CD4-positive, alpha-beta T cell (primary cell): ENCODE measurements at regions of chr10 and their contacts with region 1.

Region 1: GRCh38 chr10:28334296-28334695 is 31.4 kb upstream of the MPP7 start:
- DNase-seq: peak in 8 of 14 experiments; percentile 17 to 97 (median 52)
- ATAC-seq: peak; percentile 68
- H3K4me3 ChIP-seq: peak overlapping the region; percentile 76
- H3K4me3 Mint-ChIP-seq: peak overlapping the region; percentile 90
- H3K27ac ChIP-seq: peak overlapping the region; percentile 97 to 99
- H3K27ac Mint-ChIP-seq: peak overlapping the region; percentile 98
- H3K4me1 ChIP-seq: peaks cover 64% of the 10 kb centered on the region
- H3K4me1 Mint-ChIP-seq: peaks cover 85% of the 10 kb centered on the region
- H3K27me3 ChIP-seq: no peaks in the 10 kb centered on the region
- H3K27me3 Mint-ChIP-seq: no peaks in the 10 kb centered on the region
- CTCF ChIP-seq: no peak

Region 2: DNA sequence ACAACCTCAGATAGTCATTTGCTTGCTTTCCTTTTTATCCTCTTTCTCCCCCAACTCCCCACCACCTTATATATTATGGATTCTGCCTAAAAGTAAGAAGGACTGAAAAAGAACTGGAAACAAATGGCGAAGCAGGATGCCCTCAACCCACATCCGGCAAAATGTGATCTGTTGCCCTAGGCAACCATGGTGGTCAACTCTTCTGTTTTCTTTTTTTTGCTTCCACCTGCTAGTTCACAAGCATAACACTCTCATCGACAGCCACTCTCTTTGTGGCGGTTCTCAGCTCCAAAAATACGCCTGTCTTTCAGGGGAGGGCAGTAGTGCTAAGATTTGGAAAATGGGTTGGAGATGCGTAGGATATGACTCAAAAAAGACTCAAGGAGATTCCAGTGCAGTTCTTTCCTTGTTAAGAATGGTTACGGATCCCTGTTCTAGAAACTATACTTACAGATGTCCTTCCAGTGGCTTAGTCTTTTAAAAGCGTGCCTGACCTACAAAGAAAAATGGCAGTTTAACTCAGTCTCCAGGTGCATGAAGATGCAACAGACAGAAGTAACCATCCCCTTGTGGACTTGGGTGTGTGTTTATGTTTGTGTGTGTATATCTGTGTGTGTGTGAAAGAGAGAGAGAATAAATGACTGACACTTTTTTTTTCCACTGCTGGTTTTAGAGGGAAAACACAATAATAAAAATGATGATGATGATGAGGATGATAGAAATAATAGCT is 1885.4 kb before region 1 on chr10:
- CTCF ChIA-PET with region 1: no interaction called
- POLR2A ChIA-PET with region 1: no interaction called
- intact Hi-C with region 1: loop called in 1 of 2 experiments (anchors 5 kb)
- DNase-seq: peak; percentile 42 to 94 (median 62)
- ATAC-seq: peak; percentile 82
- H3K4me3 ChIP-seq: peak overlapping the region; percentile 20
- H3K4me3 Mint-ChIP-seq: peak overlapping the region; percentile 84
- H3K27ac ChIP-seq: peak overlapping the region; percentile 70 to 79
- H3K27ac Mint-ChIP-seq: peak overlapping the region; percentile 94
- H3K4me1 ChIP-seq: peaks cover 66% of the 10 kb centered on the region
- H3K4me1 Mint-ChIP-seq: peaks cover 92% of the 10 kb centered on the region
- H3K27me3 ChIP-seq: no peaks in the 10 kb centered on the region
- H3K27me3 Mint-ChIP-seq: no peaks in the 10 kb centered on the region
- CTCF ChIP-seq: no peak

Region 3: DNA sequence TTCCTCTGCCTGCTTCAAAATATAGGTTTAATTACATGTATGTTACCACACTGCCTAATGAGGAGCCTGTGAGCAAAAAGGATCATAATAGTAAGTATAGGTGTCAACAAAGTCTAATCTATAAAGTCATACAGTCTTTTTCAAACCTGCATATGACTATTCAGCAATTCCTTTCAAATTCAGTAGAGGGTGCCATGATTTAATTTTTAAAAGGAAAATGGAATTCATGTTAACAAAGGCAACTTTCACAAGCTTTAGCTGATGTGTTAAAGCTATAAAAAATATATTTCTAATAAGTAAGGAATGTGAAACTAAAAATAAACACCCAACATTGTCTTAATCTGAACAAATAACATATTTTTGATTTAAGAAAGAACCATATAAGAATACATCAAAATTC is 83.5 kb before region 1 on chr10:
- CTCF ChIA-PET with region 1: interaction called, 3 read pairs
- POLR2A ChIA-PET with region 1: interaction called, 6 read pairs
- intact Hi-C with region 1: loop called in 1 of 2 experiments (anchors 5 kb)
- DNase-seq: peak in 3 of 14 experiments; percentile 44 to 50 (median 48)
- ATAC-seq: peak; percentile 56
- H3K4me3 ChIP-seq: no peak overlapping the region
- H3K4me3 Mint-ChIP-seq: no peak overlapping the region
- H3K27ac ChIP-seq: no peak overlapping the region
- H3K27ac Mint-ChIP-seq: no peak overlapping the region
- H3K4me1 ChIP-seq: no peaks in the 10 kb centered on the region
- H3K4me1 Mint-ChIP-seq: peaks cover 67% of the 10 kb centered on the region
- H3K27me3 ChIP-seq: no peaks in the 10 kb centered on the region
- H3K27me3 Mint-ChIP-seq: no peaks in the 10 kb centered on the region
- CTCF ChIP-seq: peak; percentile 52

Region 4: DNA sequence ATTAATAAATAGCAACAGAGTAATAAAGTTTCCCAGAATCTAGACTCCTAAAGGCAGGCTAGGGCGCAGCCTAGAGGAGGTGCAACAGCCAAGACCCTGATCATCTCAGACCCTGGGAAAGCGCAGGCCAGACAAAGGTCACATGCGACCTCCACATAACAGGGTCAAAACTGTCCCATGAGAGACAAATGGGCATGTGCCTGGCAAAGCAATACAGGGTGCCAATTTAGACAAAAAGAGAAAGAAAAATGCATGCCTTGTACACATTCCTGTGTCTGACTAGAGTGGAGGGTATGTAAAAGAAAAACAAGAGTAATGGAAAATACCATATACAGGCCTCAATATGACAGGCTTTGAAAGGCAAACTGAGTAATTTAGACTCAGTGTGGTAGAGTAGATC is 53.6 kb before region 1 on chr10:
- CTCF ChIA-PET with region 1: no interaction called
- POLR2A ChIA-PET with region 1: no interaction called
- intact Hi-C with region 1: no loop called
- DNase-seq: no peak
- ATAC-seq: no peak
- H3K4me3 ChIP-seq: no peak overlapping the region
- H3K4me3 Mint-ChIP-seq: no peak overlapping the region
- H3K27ac ChIP-seq: no peak overlapping the region
- H3K27ac Mint-ChIP-seq: no peak overlapping the region
- H3K4me1 ChIP-seq: no peaks in the 10 kb centered on the region
- H3K4me1 Mint-ChIP-seq: peaks cover 83% of the 10 kb centered on the region
- H3K27me3 ChIP-seq: no peaks in the 10 kb centered on the region
- H3K27me3 Mint-ChIP-seq: no peaks in the 10 kb centered on the region
- CTCF ChIP-seq: no peak

Region 5: DNA sequence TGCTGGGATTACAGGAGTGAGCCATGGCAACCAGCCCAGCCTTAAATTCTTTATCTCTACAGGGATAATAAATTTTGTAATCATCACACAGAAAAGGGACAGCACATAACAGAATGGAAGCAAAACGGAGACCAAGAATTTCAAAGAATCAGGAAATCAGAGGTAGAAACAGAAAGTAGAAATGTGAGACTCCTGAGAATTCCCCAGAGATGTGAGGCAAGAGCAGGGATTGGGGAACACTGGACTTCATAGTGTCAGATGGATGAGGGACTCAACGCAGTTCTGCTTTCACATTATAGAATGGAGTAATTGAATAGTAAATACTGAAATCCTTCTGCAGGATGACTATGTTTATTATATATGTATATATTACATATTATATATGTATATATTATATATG is 21.1 kb after region 1 on chr10:
- CTCF ChIA-PET with region 1: interaction called, 5 read pairs
- POLR2A ChIA-PET with region 1: interaction called, 4 read pairs
- intact Hi-C with region 1: loop called in 1 of 2 experiments (anchors 2 kb)
- DNase-seq: no peak
- ATAC-seq: no peak
- H3K4me3 ChIP-seq: no peak overlapping the region
- H3K4me3 Mint-ChIP-seq: no peak overlapping the region
- H3K27ac ChIP-seq: no peak overlapping the region
- H3K27ac Mint-ChIP-seq: no peak overlapping the region
- H3K4me1 ChIP-seq: no peaks in the 10 kb centered on the region
- H3K4me1 Mint-ChIP-seq: no peaks in the 10 kb centered on the region
- H3K27me3 ChIP-seq: no peaks in the 10 kb centered on the region
- H3K27me3 Mint-ChIP-seq: no peaks in the 10 kb centered on the region
- CTCF ChIP-seq: no peak

Region 6: DNA sequence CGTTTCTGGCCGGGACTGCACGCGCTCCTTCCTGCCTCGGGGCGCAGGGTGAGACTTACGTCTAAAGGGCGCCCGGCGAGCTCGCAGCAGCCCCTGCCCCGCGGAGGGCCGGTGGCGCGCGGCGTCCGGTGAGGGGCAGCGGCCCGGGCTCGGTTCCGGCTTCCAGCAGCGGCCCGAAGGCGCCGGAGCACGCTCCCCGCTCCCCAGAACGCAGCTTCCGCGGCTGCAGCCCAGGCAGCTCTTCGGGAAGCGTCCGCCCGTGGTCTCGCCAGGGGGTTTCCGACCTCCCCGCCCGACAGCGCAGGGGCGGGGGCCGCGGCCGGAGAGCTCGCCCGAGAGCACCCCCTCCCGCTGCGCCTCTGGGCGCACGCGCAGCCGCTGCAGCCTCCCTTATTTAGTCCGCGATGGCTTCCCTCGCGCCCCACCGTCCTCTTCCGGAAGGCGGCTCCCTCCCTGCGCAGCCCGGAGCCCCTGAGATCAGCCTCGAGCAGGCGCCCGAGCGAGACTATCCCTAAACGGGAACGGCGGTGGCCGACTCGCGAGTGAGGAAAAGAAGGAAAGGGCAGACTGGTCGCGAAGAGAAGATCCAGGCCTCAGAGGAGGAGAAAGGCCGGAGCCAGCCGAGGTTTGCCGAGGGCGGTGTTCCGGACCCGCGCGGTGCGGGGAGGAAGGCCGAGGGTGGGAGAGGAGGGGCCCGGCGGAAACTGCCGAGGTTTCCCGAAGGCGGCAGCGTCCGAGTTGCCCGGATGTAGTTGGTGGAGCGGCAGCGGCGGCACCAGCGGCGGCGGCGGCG is 198.3 kb after region 1 on chr10 and contains the start of gene WAC:
- CTCF ChIA-PET with region 1: no interaction called
- POLR2A ChIA-PET with region 1: interaction called, 18 read pairs
- intact Hi-C with region 1: no loop called
- DNase-seq: peak; percentile 93 to 98 (median 97)
- ATAC-seq: peak; percentile 81
- H3K4me3 ChIP-seq: peak within 1 kb of the TSS; percentile 98
- H3K4me3 Mint-ChIP-seq: peak within 1 kb of the TSS; percentile 100
- H3K27ac ChIP-seq: peak within 1 kb of the TSS; percentile 99
- H3K27ac Mint-ChIP-seq: peak within 1 kb of the TSS; percentile 98
- H3K4me1 ChIP-seq: peaks cover 22% of the 10 kb centered on the region
- H3K4me1 Mint-ChIP-seq: peaks cover 73% of the 10 kb centered on the region
- H3K27me3 ChIP-seq: no peaks in the 10 kb centered on the region
- H3K27me3 Mint-ChIP-seq: no peaks in the 10 kb centered on the region
- CTCF ChIP-seq: peak; percentile 30
- total RNA-seq, gene WAC: 169 to 177 TPM